ENCODE measurements at regions of chrX and their contacts with region 1.

Region 1: GRCh38 chrX:30153881-30154260 is 61.5 kb upstream of the MAGEB2 start:
- DNase-seq: no peak
- H3K4me3 ChIP-seq: no peak overlapping the region
- H3K4me3 Mint-ChIP-seq: no peak overlapping the region
- H3K27ac Mint-ChIP-seq: no peak overlapping the region
- H3K4me1 ChIP-seq: no peaks in the 10 kb centered on the region
- H3K4me1 Mint-ChIP-seq: no peaks in the 10 kb centered on the region
- H3K27me3 ChIP-seq: no peaks in the 10 kb centered on the region
- H3K27me3 Mint-ChIP-seq: no peaks in the 10 kb centered on the region
- CTCF ChIP-seq: no peak

Region 2: GRCh38 chrX:28625223-28625622 is 1528.6 kb before region 1 on chrX:
- CTCF ChIA-PET with region 1: no interaction called
- POLR2A ChIA-PET with region 1: no interaction called
- intact Hi-C with region 1: loop called (anchors 10 kb)
- DNase-seq: no peak
- H3K4me3 ChIP-seq: no peak overlapping the region
- H3K4me3 Mint-ChIP-seq: no peak overlapping the region
- H3K27ac Mint-ChIP-seq: no peak overlapping the region
- H3K4me1 ChIP-seq: no peaks in the 10 kb centered on the region
- H3K4me1 Mint-ChIP-seq: no peaks in the 10 kb centered on the region
- H3K27me3 ChIP-seq: no peaks in the 10 kb centered on the region
- H3K27me3 Mint-ChIP-seq: peaks cover 3% of the 10 kb centered on the region
- CTCF ChIP-seq: no peak

Region 3: GRCh38 chrX:30308263-30309138 is 154.6 kb after region 1 on chrX:
- CTCF ChIA-PET with region 1: no interaction called
- POLR2A ChIA-PET with region 1: no interaction called
- intact Hi-C with region 1: no loop called
- DNase-seq: no peak
- H3K4me3 ChIP-seq: no peak overlapping the region
- H3K4me3 Mint-ChIP-seq: no peak overlapping the region
- H3K27ac Mint-ChIP-seq: no peak overlapping the region
- H3K4me1 ChIP-seq: no peaks in the 10 kb centered on the region
- H3K4me1 Mint-ChIP-seq: no peaks in the 10 kb centered on the region
- H3K27me3 ChIP-seq: no peaks in the 10 kb centered on the region
- H3K27me3 Mint-ChIP-seq: peaks cover 2% of the 10 kb centered on the region
- CTCF ChIP-seq: no peak